Activated naive CD8-positive, alpha-beta T cell treated with anti-CD3 and anti-CD28 coated beads, Interleukin-2, amount 10 ng/mL, durations not matched to agents 7 days and 5 days (primary cell): ENCODE measurements at regions of chr7 and their contacts with region 1.

Region 1: GRCh38 chr7:24922099-24922773 is 57.7 kb downstream of the OSBPL3 start:
- DNase-seq: no peak
- ATAC-seq: no peak
- H3K4me3 Mint-ChIP-seq: peak overlapping the region; percentile 32
- H3K27ac Mint-ChIP-seq: peak overlapping the region; percentile 95
- H3K4me1 Mint-ChIP-seq: peaks cover 75% of the 10 kb centered on the region
- H3K27me3 Mint-ChIP-seq: no peaks in the 10 kb centered on the region

Region 2: GRCh38 chr7:24854866-24855265 is 67.4 kb before region 1 on chr7:
- POLR2A ChIA-PET with region 1: no interaction called
- DNase-seq: no peak
- ATAC-seq: no peak
- H3K4me3 Mint-ChIP-seq: no peak overlapping the region
- H3K27ac Mint-ChIP-seq: no peak overlapping the region
- H3K4me1 Mint-ChIP-seq: peaks cover 17% of the 10 kb centered on the region
- H3K27me3 Mint-ChIP-seq: no peaks in the 10 kb centered on the region

Region 3: GRCh38 chr7:24911213-24911603 is 11.0 kb before region 1 on chr7:
- POLR2A ChIA-PET with region 1: interaction called, 15 read pairs
- DNase-seq: no peak
- ATAC-seq: peak; percentile 67
- H3K4me3 Mint-ChIP-seq: peak overlapping the region; percentile 79
- H3K27ac Mint-ChIP-seq: peak overlapping the region; percentile 99
- H3K4me1 Mint-ChIP-seq: peaks cover 53% of the 10 kb centered on the region
- H3K27me3 Mint-ChIP-seq: no peaks in the 10 kb centered on the region